ENCODE measurements at regions of chr1 and their contacts with region 1.

Region 1: DNA sequence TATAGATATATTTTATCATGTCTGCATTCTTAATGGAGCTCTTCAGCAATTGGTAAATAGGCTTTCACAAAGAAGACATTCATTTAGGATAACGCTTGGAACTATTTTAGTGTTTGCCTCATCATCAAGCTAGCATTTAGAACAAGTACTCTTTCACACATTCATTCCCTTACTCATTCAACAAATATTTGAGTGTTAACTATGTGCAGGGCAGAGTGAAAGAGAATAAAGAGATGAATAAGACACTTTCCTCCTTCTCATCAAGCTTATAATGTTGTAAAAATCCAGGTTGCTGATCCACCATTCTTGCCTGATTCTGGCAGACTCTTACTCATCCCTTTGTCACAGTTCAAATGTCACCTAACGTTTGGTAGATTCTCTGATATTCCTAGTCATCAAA is 386.3 kb upstream of the BEND5 start:
- DNase-seq: no peak
- H3K4me3 ChIP-seq: no peak overlapping the region
- H3K27ac ChIP-seq: no peak overlapping the region
- H3K4me1 ChIP-seq: no peaks in the 10 kb centered on the region
- H3K27me3 ChIP-seq: no peaks in the 10 kb centered on the region
- CTCF ChIP-seq: no peak
- POLR2A ChIP-seq: no peak

Region 2: GRCh38 chr1:50369830-50370229 is 1206.8 kb after region 1 on chr1:
- intact Hi-C with region 1: loop called (anchors 5 kb)
- DNase-seq: no peak
- H3K4me3 ChIP-seq: no peak overlapping the region
- H3K27ac ChIP-seq: no peak overlapping the region
- H3K4me1 ChIP-seq: peaks cover 5% of the 10 kb centered on the region
- H3K27me3 ChIP-seq: no peaks in the 10 kb centered on the region
- CTCF ChIP-seq: no peak
- POLR2A ChIP-seq: no peak

Measured in vagina (tissue), 2 donors.